G401 (cell line): ENCODE measurements at regions of chr2 and their contacts with region 1.

Region 1: GRCh38 chr2:241432824-241433448 is 75.4 kb downstream of the STK25 start:
- DNase-seq: no peak

Region 2: DNA sequence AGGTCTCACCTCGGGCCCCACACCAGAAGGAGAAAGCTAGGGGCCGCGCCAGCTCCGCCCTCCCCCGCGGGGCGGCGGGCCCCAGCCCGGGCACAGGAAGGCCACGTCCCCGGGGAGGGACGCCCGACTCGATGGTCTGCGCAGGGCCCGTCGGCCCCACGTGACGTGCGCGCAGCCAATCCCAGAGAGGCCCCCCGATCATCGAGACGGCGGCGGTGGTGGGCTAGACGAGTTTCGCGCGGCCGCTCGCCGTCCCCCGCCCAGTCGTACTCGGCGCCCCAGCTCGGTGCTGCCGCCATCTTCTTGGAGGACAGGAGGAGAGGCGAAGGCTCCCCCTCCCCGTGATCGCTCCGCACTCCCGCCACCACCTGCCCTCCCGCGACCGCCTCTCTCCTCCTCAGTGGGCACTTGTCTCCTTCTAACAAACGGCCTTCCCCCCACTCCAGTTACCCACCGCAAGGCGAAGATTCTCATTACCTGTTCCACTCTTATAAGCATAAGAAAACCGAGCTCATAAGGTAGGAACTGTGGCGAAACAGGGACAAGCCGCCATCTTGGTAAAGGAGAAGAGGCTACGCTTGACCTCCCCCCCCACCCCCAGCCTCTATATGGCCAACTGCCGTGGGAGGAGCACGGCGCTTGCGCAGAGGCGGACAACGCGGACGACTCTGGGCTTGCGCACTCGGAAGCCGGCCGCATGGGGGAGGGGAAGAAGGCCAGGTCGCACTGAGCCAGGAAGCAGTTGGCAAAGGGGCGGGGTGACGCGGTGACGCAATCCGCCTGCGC is 117.7 kb before region 1 on chr2 and contains the start of gene HDLBP:
- in situ Hi-C with region 1: no loop called
- DNase-seq: peak; percentile 96
- total RNA-seq, gene HDLBP: 386 and 442 TPM in 2 replicates

Region 3: DNA sequence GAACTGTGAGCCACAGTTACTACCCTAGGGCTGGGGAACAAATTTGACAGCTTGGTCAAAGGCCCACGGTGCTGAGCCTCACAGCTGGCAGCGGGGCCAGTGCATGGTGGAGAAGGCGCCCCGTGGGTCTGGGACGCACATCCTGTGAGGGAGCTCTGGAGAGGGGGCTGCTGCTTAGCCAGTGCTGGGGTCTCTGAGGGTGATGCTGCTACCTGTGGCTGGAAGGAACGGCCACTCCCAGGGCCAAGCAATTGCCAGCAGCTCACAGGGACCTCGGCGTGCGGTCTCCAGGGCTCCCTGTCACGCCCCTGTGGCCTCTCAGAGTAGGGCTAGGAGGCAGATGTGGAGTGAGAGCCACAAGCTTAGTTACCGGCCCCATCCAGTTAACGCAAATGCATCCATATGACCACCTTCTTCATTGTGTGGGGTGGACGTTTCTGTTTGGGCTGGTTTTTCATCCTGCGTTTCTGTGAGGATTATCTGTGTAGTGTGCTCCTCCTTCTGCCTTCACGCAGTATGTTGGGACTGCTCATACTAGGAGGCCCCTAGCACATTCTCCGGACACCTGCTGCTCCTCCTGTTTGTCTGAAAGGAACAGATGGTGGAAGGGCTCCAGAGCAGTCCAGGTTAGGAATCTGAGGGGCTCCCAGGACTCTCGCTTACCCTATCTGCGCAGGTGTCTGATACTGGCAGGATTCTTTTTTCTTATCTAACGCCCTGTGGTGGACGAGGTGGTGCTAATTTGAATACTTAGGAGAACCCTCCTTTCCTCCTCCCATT is 49.4 kb after region 1 on chr2:
- in situ Hi-C with region 1: loop called (anchors 5 kb)
- DNase-seq: peak; percentile 83